Natural killer cell (primary cell): ENCODE measurements at regions of chr6 and their contacts with region 1.

Region 1: GRCh38 chr6:152484806-152485205 is 152.4 kb downstream of the SYNE1 start:
- DNase-seq: no peak
- ATAC-seq: no peak
- H3K4me3 ChIP-seq: no peak overlapping the region
- H3K4me3 Mint-ChIP-seq: no peak overlapping the region
- H3K27ac ChIP-seq: no peak overlapping the region
- H3K27ac Mint-ChIP-seq: peak overlapping the region; percentile 11 to 70
- H3K4me1 ChIP-seq: peaks cover 4% of the 10 kb centered on the region
- H3K4me1 Mint-ChIP-seq: no peaks in the 10 kb centered on the region
- H3K27me3 ChIP-seq: no peaks in the 10 kb centered on the region
- H3K27me3 Mint-ChIP-seq: no peaks in the 10 kb centered on the region
- CTCF ChIP-seq: no peak

Region 2: DNA sequence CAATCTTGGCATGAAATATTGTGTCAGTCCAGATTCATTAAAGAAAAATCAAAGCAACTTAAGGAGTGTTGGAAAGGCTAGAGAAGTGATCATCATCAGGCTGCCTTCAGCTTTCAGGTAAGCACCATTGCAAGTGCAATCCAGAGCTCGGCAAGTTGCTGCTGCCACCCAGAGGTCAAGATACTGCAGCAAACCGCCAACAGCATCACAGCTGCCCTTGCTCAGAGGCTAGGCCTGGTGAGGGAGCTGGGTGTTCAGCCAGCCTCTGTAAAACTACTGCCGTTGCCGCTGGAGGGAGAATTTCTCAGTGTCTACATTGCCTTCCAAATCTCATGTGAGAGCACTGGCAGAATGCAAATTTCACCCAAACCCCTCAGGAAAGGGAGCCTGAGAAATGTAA is 158.2 kb after region 1 on chr6:
- intact Hi-C with region 1: loop called (anchors 1 kb)
- DNase-seq: peak; percentile 51 to 74
- ATAC-seq: peak; percentile 82 to 100 (median 99)
- H3K4me3 ChIP-seq: no peak overlapping the region
- H3K4me3 Mint-ChIP-seq: no peak overlapping the region
- H3K27ac ChIP-seq: no peak overlapping the region
- H3K27ac Mint-ChIP-seq: no peak overlapping the region
- H3K4me1 ChIP-seq: peaks cover 3% of the 10 kb centered on the region
- H3K4me1 Mint-ChIP-seq: peaks cover 25 to 29% of the 10 kb centered on the region in 2 donors
- H3K27me3 ChIP-seq: no peaks in the 10 kb centered on the region
- H3K27me3 Mint-ChIP-seq: peaks cover 13 to 14% of the 10 kb centered on the region in 2 donors
- CTCF ChIP-seq: peak; percentile 65

Region 3: GRCh38 chr6:152669895-152670294 is 185.1 kb after region 1 on chr6:
- intact Hi-C with region 1: loop called (anchors 2 kb)
- DNase-seq: peak in 1 of 2 donors; percentile 32
- ATAC-seq: peak; percentile 47 to 64 (median 63)
- H3K4me3 ChIP-seq: no peak overlapping the region
- H3K4me3 Mint-ChIP-seq: no peak overlapping the region
- H3K27ac ChIP-seq: no peak overlapping the region
- H3K27ac Mint-ChIP-seq: no peak overlapping the region
- H3K4me1 ChIP-seq: no peaks in the 10 kb centered on the region
- H3K4me1 Mint-ChIP-seq: no peaks in the 10 kb centered on the region
- H3K27me3 ChIP-seq: peaks cover 2% of the 10 kb centered on the region
- H3K27me3 Mint-ChIP-seq: peaks cover 18 to 43% of the 10 kb centered on the region in 2 donors
- CTCF ChIP-seq: peak; percentile 42